Activated T-helper 1 cell treated with anti-CD3 and anti-CD28 coated beads, Interleukin-12 subunit alpha, Interleukin-12 subunit beta, Interleukin-2, Interleukin-4 antibody, amounts not matched to agents 30 ng/mL and 10 ng/mL and 1 ng/mL, durations not matched to agents 14 hours and 24 hours and 36 hours (primary cell): ENCODE measurements at regions of chr7 and their contacts with region 1.

Region 1: GRCh38 chr7:113118074-113118959 is at the start of gene SMIM30:
- DNase-seq: peak; percentile 83
- H3K4me3 Mint-ChIP-seq: peak within 1 kb of the TSS; percentile 93
- H3K27ac Mint-ChIP-seq: peak within 1 kb of the TSS; percentile 92
- H3K4me1 Mint-ChIP-seq: peaks cover 46% of the 10 kb centered on the region
- H3K27me3 Mint-ChIP-seq: no peaks in the 10 kb centered on the region
- total RNA-seq, gene SMIM30: 32.4 and 36.8 TPM in 2 replicates

Region 2: GRCh38 chr7:111561885-111562732 is 1556.2 kb before region 1 on chr7 and contains the start of gene IMMP2L:
- intact Hi-C with region 1: loop called (anchors 2 kb)
- DNase-seq: peak; percentile 89
- H3K4me3 Mint-ChIP-seq: peak within 1 kb of the TSS; percentile 87
- H3K27ac Mint-ChIP-seq: peak within 1 kb of the TSS; percentile 89
- H3K4me1 Mint-ChIP-seq: peaks cover 37% of the 10 kb centered on the region
- H3K27me3 Mint-ChIP-seq: no peaks in the 10 kb centered on the region
- total RNA-seq, gene IMMP2L: 11.3 and 16.0 TPM in 2 replicates

Region 3: GRCh38 chr7:112390167-112390566 is 728.1 kb before region 1 on chr7:
- intact Hi-C with region 1: loop called (anchors 5 kb)
- DNase-seq: no peak
- H3K4me3 Mint-ChIP-seq: no peak overlapping the region
- H3K27ac Mint-ChIP-seq: no peak overlapping the region
- H3K4me1 Mint-ChIP-seq: peaks cover 13% of the 10 kb centered on the region
- H3K27me3 Mint-ChIP-seq: peaks cover 21% of the 10 kb centered on the region

Region 4: GRCh38 chr7:112789817-112790585 is 328.3 kb before region 1 on chr7 and contains the start of gene TMEM168:
- intact Hi-C with region 1: loop called (anchors 1 kb)
- DNase-seq: peak; percentile 77
- H3K4me3 Mint-ChIP-seq: peak within 1 kb of the TSS; percentile 96
- H3K27ac Mint-ChIP-seq: peak within 1 kb of the TSS; percentile 85
- H3K4me1 Mint-ChIP-seq: peaks cover 41% of the 10 kb centered on the region
- H3K27me3 Mint-ChIP-seq: no peaks in the 10 kb centered on the region
- total RNA-seq, gene TMEM168: 18.1 and 18.2 TPM in 2 replicates

Region 5: GRCh38 chr7:112939574-112940314 is 178.6 kb before region 1 on chr7:
- intact Hi-C with region 1: loop called (anchors 1 kb)
- DNase-seq: peak; percentile 99
- H3K4me3 Mint-ChIP-seq: peak overlapping the region; percentile 91
- H3K27ac Mint-ChIP-seq: peak overlapping the region; percentile 95
- H3K4me1 Mint-ChIP-seq: peaks cover 39% of the 10 kb centered on the region
- H3K27me3 Mint-ChIP-seq: peaks cover 6% of the 10 kb centered on the region

Region 6: DNA sequence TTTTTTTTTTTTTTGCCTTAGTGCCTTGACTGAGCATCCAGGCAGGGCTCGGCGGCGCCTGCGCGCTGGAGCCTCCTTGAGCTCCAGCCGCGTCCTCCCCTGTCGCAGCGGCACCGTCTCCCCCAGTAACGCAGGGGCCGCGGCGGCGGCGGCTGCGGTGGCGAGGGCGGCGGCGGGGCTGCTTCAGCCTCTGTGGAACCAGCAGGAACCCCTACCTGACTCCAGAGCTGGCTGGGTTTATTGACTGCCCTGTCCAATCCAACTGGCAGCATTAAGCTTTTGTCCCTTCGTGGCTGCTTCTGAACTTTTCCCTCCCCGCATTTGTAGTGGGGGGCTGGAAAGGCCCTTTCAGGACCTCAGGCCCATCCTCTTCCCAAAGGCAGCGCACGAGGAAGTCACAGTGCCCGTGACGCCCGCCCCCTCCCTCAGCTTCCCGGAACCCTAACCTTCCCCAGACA is 31.9 kb before region 1 on chr7 and contains the start of gene GPR85:
- intact Hi-C with region 1: loop called (anchors 1 kb)
- DNase-seq: no peak
- H3K4me3 Mint-ChIP-seq: peak within 1 kb of the TSS; percentile 47
- H3K27ac Mint-ChIP-seq: no peak within 1 kb of the TSS
- H3K4me1 Mint-ChIP-seq: peaks cover 7% of the 10 kb centered on the region
- H3K27me3 Mint-ChIP-seq: peaks cover 38% of the 10 kb centered on the region
- total RNA-seq, gene GPR85: not detected in 2 replicates